CD4-positive, alpha-beta T cell (primary cell): ENCODE measurements at regions of chr6 and their contacts with region 1.

Region 1: DNA sequence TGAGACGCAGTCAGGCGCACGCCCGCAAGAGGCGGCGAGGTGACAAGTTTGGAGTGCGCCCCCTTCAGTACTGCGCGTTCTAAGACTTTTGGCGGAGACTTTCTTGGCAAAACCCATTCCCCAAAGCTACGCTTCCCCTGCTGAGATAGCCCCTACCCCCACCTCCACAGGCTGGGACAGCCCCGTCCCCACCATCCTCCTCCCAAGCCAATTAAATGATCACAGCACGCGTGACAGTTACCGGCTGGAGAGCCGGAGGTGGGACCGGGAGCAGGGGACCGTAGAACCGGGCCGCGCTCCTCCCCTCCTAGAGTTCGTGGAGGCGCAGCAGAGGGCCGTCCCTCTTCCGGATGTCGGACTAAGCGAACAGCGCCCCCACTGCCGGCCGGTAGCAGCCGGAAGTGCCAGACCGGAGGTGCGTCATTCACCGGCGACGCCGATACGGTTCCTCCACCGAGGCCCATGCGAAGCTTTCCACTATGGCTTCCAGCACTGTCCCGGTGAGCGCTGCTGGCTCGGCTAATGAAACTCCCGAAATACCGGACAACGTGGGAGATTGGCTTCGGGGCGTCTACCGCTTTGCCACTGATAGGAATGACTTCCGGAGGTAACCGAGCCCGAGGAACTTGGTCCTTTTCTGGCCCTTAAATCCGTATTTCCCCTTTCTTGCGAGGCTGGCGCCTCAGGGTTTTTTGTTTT is at the start of gene TOMM6:
- DNase-seq: peak; percentile 91 to 97 (median 93)
- ATAC-seq: peak; percentile 77
- H3K4me3 ChIP-seq: peak within 1 kb of the TSS; percentile 78
- H3K4me3 Mint-ChIP-seq: peak within 1 kb of the TSS; percentile 92
- H3K27ac ChIP-seq: peak within 1 kb of the TSS; percentile 87 to 89
- H3K27ac Mint-ChIP-seq: peak within 1 kb of the TSS; percentile 96
- H3K4me1 ChIP-seq: peaks cover 23% of the 10 kb centered on the region
- H3K4me1 Mint-ChIP-seq: peaks cover 27% of the 10 kb centered on the region
- H3K27me3 ChIP-seq: no peaks in the 10 kb centered on the region
- H3K27me3 Mint-ChIP-seq: no peaks in the 10 kb centered on the region
- CTCF ChIP-seq: peak; percentile 90
- total RNA-seq, gene TOMM6: 78.8 to 83.2 TPM

Region 2: DNA sequence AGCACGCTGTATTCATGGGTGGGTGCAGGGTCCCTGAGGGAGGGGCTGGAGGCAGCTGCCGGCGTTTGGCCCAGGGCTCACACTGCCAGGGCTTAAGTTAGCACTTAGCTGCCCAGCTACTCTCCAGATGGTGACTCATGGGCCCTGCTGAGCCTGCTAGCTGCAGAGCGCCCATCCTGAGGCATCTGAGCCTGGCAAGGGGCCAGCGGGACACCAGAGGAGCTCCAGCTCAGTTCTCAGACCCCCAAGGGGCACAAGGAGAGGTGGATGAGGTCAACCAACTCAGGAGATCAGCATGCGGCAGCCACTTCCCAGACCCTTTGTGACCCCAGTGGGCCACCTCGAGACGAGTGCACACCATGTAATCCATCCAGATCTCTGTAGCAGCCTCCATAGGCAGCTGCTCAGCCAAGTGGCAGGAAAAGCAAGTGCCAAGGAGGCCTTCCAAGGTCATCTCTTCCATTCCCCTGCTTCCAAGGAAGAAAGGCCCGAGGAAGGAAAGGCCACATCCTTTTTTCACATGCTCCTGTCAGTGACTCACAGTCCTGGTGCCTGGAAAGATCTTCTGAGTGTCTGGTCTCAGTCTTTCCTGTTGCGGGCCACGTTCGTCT is 205.9 kb before region 1 on chr6:
- CTCF ChIA-PET with region 1: no interaction called
- POLR2A ChIA-PET with region 1: no interaction called
- intact Hi-C with region 1: no loop called
- DNase-seq: no peak
- ATAC-seq: no peak
- H3K4me3 ChIP-seq: no peak overlapping the region
- H3K4me3 Mint-ChIP-seq: no peak overlapping the region
- H3K27ac ChIP-seq: no peak overlapping the region
- H3K27ac Mint-ChIP-seq: no peak overlapping the region
- H3K4me1 ChIP-seq: no peaks in the 10 kb centered on the region
- H3K4me1 Mint-ChIP-seq: no peaks in the 10 kb centered on the region
- H3K27me3 ChIP-seq: no peaks in the 10 kb centered on the region
- H3K27me3 Mint-ChIP-seq: no peaks in the 10 kb centered on the region
- CTCF ChIP-seq: no peak

Region 3: DNA sequence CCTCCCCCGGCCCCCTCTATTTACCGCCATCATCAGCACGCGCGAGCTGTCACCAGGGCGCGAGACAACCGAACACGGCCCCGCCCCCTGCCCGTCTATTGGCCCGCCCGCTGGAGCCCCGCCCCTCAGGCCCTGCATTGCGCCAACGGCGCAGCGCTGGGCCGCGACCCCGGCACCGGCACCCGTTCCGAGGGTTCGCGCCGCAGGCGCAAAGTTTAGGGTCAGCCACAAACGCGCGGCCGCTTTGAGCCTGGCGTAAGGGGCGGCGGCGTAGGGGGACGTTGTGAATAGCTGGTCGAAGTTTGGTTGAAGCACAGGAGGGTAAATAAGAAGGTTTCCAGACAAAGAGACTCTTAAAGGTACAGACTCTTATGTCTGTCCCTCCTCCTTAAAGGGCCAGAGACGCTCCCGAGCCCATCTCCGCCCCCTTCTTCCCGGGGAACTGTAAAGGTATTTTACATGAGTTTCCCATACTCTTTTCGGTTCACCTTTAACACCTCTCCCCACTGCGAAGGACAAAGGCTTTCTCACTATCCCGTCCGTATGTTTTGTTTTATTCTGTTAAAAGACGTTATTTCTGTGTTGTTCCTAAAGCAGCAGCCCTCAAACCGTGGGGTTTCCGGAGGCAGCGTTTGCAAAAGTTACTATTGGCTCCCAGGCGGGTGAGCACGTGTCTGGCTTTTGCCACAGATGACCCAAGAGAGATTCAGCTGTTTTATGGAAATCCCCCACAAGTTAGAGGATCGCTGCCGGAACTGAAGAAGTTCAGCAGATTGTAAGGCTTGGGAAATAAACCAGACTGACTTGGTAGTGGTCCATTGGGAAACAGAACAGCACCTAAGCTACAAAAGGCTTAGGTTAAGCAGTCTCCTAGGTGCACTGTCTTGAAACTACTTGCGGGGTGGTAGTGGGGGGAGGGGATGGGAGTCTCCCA is 108.2 kb after region 1 on chr6 and contains the start of gene USP49:
- CTCF ChIA-PET with region 1: interaction called, 24 read pairs
- POLR2A ChIA-PET with region 1: interaction called, 6 read pairs
- intact Hi-C with region 1: loop called (anchors 1 to 2 kb)
- DNase-seq: peak; percentile 79 to 96 (median 88)
- ATAC-seq: peak; percentile 93
- H3K4me3 ChIP-seq: peak within 1 kb of the TSS; percentile 84
- H3K4me3 Mint-ChIP-seq: no peak within 1 kb of the TSS
- H3K27ac ChIP-seq: peak within 1 kb of the TSS; percentile 77 to 80
- H3K27ac Mint-ChIP-seq: no peak within 1 kb of the TSS
- H3K4me1 ChIP-seq: peaks cover 21% of the 10 kb centered on the region
- H3K4me1 Mint-ChIP-seq: peaks cover 12% of the 10 kb centered on the region
- H3K27me3 ChIP-seq: no peaks in the 10 kb centered on the region
- H3K27me3 Mint-ChIP-seq: no peaks in the 10 kb centered on the region
- CTCF ChIP-seq: no peak
- total RNA-seq, gene USP49: 1.3 TPM

Region 4: DNA sequence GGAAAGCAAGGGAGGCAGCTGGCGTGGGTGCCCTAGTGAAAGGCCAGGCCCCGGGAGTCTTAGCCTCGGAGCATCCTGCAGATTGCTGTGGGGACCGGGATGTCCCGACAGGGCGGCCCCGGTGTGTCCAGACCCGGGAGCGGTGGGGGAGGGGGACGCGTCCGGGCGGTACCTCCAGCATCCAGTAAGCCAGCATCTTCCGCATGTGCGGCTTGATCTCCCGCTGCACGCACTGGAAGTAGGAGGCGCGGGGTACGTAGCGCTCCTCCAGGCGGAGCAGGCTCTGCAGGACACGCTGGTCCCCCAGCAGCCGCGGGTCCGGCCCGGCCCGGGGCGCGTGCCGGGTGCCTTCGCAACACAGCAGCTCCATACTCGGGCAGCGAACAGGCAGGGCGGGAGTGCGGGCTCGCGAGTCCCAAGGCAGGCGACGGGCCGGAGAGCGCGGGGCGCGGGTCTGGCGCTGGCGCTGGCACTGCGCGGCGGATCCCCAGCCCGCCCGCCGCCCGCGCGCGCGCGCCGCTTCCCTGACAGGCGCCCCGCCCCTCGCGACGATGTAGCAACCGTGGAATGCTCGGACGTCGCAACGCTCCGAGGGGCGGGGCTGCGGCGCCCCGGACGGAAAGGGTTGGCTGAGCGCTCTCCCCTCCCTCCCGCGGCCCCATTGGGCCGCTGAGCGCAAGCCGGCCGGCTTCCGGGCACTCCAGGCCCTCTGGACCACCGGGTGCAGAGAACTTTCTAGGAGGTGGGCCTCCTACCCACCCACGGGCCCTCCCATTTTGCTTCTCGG is 154.1 kb after region 1 on chr6 and contains the start of gene CCND3:
- CTCF ChIA-PET with region 1: interaction called, 13 read pairs
- POLR2A ChIA-PET with region 1: interaction called, 7 read pairs
- intact Hi-C with region 1: loop called (anchors 1 to 5 kb)
- DNase-seq: peak; percentile 63 to 92 (median 81)
- ATAC-seq: peak; percentile 55
- H3K4me3 ChIP-seq: peak within 1 kb of the TSS; percentile 96
- H3K4me3 Mint-ChIP-seq: peak within 1 kb of the TSS; percentile 97
- H3K27ac ChIP-seq: peak within 1 kb of the TSS; percentile 68 to 74
- H3K27ac Mint-ChIP-seq: peak within 1 kb of the TSS; percentile 93
- H3K4me1 ChIP-seq: peaks cover 72% of the 10 kb centered on the region
- H3K4me1 Mint-ChIP-seq: peaks cover 80% of the 10 kb centered on the region
- H3K27me3 ChIP-seq: no peaks in the 10 kb centered on the region
- H3K27me3 Mint-ChIP-seq: no peaks in the 10 kb centered on the region
- CTCF ChIP-seq: no peak
- total RNA-seq, gene CCND3: 247 to 248 TPM

Region 5: GRCh38 chr6:42050266-42051032 is 263.1 kb after region 1 on chr6 and contains the start of gene TAF8:
- CTCF ChIA-PET with region 1: interaction called, 75 read pairs
- POLR2A ChIA-PET with region 1: interaction called, 34 read pairs
- intact Hi-C with region 1: loop called in 1 of 2 experiments (anchors 1 kb)
- DNase-seq: peak; percentile 78 to 95 (median 84)
- ATAC-seq: peak; percentile 53
- H3K4me3 ChIP-seq: peak within 1 kb of the TSS; percentile 85
- H3K4me3 Mint-ChIP-seq: peak within 1 kb of the TSS; percentile 96
- H3K27ac ChIP-seq: peak within 1 kb of the TSS; percentile 85 to 89
- H3K27ac Mint-ChIP-seq: peak within 1 kb of the TSS; percentile 89
- H3K4me1 ChIP-seq: peaks cover 61% of the 10 kb centered on the region
- H3K4me1 Mint-ChIP-seq: peaks cover 72% of the 10 kb centered on the region
- H3K27me3 ChIP-seq: no peaks in the 10 kb centered on the region
- H3K27me3 Mint-ChIP-seq: no peaks in the 10 kb centered on the region
- CTCF ChIP-seq: no peak
- total RNA-seq, gene TAF8: 30.1 to 34.7 TPM